Head of caudate nucleus (tissue), 42 donors: ENCODE measurements at regions of chr22 and their contacts with region 1.

Region 1: DNA sequence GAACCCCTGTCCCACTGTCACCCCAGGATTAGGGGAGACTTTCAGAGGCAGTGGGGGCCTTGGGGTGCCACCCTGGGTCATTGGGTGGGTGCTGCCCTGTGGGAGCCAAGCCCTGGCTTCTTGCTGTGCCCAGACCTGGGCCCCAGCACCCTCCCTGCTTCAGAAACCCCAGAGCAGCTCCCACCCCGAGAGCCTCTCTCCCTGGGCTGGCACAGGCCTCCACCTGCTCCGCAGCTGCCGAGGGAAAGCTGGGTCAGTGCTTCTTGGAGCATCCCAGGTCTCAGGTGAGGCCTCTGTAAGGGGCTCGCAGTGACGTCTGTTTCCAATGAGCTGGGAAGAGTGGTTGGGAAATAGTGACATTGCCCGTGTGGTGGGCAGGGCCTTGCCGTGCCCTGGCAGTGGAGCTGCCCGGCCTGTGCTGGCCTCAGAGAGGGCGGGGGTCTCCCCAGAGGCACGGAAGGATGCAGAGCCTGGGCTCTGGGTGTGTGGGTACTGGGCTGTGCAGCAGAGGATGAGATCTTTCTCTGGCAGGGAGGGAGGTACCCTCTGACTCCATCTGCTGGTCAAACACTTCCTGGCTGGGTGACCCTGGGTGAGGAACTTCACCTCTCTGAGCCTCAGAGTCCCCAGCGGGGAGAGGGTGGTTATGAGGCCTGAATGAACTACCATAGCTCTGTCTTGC is 23.0 kb downstream of the C22orf23 start:
- DNase-seq: peak in 29 of 42 donors; percentile 23 to 79 (median 48)

Region 2: DNA sequence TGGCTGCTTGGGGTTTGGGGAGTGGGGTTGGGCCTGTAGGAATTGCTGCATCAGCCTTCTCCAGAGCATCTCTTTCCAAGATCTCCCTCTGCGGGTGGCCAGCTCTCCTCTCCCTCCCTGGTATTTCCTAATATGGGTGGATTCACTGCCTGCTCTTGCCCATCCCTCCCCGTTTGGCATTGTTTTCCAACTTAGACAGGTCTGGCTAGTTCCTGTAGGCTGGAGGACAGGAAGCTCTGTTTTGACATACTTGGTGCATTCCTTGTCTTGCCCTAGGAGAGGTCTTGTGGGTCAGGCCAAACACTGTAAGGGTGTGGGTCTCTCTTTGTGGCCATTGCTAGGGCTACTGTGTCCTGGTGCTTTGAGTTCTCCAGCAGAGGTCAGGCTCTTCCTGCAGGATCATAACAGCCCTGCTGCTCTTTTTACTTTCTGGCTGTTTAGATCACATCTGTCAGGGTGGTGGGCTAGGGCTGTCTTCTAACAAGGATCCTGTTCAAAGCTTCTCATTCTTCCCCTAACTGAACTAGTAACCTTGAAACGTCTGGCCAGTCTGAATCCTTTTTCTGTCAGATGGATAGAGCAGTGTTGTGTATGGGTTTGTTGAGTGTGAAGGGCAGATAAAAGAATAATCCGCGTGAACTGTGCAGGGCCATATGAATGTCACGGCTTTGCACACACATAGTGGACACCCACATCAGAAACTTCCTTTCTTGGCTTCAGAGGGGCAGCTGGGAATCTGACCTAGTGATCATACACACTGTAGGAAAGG is 42.6 kb before region 1 on chr22:
- intact Hi-C with region 1: loop called (anchors 2 kb)
- DNase-seq: peak in 33 of 42 donors; percentile 28 to 82 (median 61)

Region 3: GRCh38 chr22:38034274-38034882 is 104.0 kb after region 1 on chr22:
- intact Hi-C with region 1: no loop called
- DNase-seq: peak; percentile 79 to 96 (median 89)

Region 4: DNA sequence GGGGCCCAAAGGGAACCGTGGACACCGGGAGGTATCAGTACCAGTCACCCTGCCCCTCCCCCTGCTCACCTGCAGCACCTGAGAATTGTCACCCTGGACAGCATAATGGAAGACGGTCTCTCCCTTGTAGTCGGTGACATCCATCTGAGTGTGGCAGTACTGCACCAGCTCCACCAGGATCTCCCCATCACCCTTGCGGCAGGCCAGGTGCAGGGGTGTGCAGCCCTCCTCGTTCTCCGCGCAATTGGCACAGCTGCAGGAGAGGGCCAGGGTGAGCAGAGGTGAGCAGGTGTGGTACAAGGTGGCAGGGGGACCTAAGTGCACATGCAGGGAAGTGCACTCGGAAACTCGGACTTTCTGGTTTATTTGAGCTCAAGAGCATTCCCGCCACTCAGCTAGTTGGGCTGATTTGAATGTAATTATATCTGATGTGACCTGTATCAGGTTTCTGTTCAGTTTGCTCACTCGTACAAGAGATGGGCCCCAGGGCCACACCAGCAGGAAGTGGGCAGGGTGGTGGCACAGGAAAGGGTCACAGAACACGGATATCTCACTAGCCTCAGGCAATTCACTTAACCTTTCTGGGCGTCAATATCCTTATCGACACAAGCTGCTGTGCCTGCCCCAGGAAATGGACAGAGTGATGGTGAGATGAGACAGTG is 212.8 kb after region 1 on chr22:
- intact Hi-C with region 1: no loop called
- DNase-seq: peak in 1 of 42 donors; percentile 4